HEK293 (cell line): ENCODE measurements at regions of chr6 and their contacts with region 1.

Region 1: GRCh38 chr6:31366693-31367470 is 9.9 kb upstream of the HLA-B start:
- H3K4me3 ChIP-seq: peak overlapping the region; percentile 26
- H3K27ac ChIP-seq: no peak overlapping the region
- H3K4me1 ChIP-seq: no peaks in the 10 kb centered on the region
- CTCF ChIP-seq: peak; percentile 99

Region 2: DNA sequence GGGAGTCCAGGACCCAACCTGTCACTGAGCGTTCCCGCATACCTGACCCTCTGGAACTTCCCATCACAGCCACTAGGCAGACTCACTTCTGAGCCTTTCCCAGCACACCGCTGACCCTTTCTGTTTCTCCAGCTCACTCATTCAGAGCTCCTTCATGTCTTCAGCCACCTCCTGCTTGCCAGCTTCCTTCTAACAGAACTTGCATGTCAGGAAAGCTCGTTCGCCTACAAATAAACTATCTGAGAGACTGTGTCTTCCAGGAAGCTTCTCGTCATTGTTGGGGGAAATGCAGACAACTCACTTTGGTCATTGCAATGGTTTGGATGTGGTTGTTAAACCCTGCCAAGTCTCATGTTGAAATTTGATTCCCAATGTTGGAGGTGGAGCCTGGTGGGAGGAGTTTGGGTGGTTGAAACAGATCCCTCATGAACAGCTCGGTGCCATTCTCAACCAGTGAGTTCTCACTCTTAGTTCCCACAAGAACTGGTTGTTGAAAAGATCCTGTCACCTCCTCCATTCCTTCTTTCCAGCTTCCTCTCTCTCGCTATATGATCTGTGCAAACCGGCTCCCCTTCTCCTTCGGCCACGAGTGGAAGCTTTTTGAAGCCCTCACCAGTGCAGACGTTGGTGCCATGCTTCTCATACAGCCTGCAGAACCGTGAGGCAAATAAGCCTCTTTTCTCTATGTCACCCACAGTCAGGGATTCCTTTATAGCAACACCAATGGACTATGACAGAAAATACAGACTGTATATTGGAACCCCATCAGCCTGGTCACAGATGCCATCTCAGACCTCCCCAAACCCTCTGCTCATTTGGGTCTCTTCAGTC is 384.7 kb before region 1 on chr6:
- CTCF ChIA-PET with region 1: no interaction called
- POLR2A ChIA-PET with region 1: no interaction called
- H3K4me3 ChIP-seq: no peak overlapping the region; the same call in 1 of the 2 replicates
- H3K27ac ChIP-seq: no peak overlapping the region
- H3K4me1 ChIP-seq: no peaks in the 10 kb centered on the region
- CTCF ChIP-seq: no peak

Region 3: GRCh38 chr6:31143148-31143547 is 223.7 kb before region 1 on chr6:
- CTCF ChIA-PET with region 1: interaction called, 32 read pairs
- POLR2A ChIA-PET with region 1: no interaction called
- H3K4me3 ChIP-seq: no peak overlapping the region
- H3K27ac ChIP-seq: no peak overlapping the region
- H3K4me1 ChIP-seq: no peaks in the 10 kb centered on the region
- CTCF ChIP-seq: no peak

Region 4: DNA sequence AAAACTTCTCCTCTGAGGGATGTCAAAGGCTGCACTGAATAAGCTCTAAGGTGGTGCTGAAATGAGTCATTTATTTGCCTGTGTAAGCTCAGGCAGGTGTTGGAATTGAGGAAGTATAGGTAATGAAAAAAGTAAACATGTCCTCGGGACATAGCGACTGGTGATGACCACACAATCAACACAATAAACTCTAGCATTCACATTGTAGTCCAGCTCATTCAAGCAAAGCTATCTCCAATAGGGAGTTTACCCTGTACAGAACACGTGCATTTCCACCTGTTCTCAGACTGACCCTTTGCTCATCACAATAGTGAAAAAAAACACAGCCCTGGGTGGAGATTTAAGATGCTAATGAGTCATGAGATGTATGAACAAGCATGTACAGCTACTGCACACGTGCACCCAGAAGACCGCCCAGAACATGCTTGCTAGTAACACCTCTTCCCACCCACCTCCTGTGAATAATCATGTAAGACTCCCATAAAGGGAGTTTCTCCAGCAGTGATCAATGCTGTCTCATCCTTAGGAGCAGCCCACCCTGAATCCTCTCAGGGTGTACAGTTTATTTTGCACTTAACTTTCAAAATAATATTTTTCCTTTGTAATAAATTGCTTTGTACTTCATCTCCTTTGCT is 163.4 kb before region 1 on chr6:
- CTCF ChIA-PET with region 1: interaction called, 214 read pairs
- POLR2A ChIA-PET with region 1: interaction called, 13 read pairs
- H3K4me3 ChIP-seq: peak overlapping the region; percentile 21
- H3K27ac ChIP-seq: peak overlapping the region; percentile 48; the same call in 1 of the 2 replicates
- H3K4me1 ChIP-seq: peaks cover 6% of the 10 kb centered on the region
- CTCF ChIP-seq: no peak

Region 5: DNA sequence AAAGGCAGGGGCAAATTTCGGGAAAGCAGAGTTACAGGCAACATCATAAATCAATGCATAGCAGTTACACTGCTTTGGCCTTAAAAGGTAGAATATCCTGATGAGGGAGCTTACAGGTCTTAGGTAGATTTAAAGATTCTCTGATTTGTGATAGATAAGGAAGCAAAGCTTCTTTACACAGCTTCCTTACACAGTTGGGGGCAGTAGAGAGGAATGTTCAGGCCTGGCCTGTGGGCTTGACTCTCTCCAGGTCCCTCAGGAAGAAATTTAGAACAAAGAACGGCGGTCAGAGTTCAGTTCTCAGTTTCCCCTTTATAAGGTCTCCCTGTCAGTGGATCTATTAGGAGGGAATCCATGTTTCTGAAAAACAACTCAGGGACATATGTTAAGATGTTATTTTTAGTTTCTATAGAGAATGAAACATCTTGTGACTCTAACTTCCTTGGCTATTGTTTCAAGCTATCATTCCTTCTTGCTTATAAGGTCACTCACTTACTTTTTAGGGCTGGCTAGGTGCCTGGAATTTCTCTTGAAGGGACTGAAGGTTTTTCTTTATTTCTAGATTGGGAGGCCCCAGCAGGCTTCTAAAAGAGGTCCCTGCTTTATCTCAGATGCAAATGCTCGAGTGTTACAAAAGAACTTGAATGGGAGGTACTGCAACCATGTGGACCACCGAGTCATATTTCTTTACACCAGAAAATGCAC is 21.7 kb before region 1 on chr6:
- CTCF ChIA-PET with region 1: interaction called, 12 read pairs
- POLR2A ChIA-PET with region 1: no interaction called
- H3K4me3 ChIP-seq: no peak overlapping the region
- H3K27ac ChIP-seq: no peak overlapping the region
- H3K4me1 ChIP-seq: no peaks in the 10 kb centered on the region
- CTCF ChIP-seq: no peak

Region 6: GRCh38 chr6:31383149-31383548 is 16.3 kb after region 1 on chr6:
- CTCF ChIA-PET with region 1: interaction called, 42 read pairs
- POLR2A ChIA-PET with region 1: no interaction called
- H3K4me3 ChIP-seq: no peak overlapping the region
- H3K27ac ChIP-seq: no peak overlapping the region
- H3K4me1 ChIP-seq: no peaks in the 10 kb centered on the region
- CTCF ChIP-seq: no peak